A673 (cell line): ENCODE measurements at regions of chr12 and their contacts with region 1.

Region 1: GRCh38 chr12:34022079-34022830 is at the start of gene ALG10:
- DNase-seq: peak; percentile 99
- H3K4me3 ChIP-seq: peak within 1 kb of the TSS; percentile 91
- H3K27ac ChIP-seq: peak within 1 kb of the TSS; percentile 91
- H3K4me1 ChIP-seq: no peaks in the 10 kb centered on the region
- H3K27me3 ChIP-seq: no peaks in the 10 kb centered on the region
- CTCF ChIP-seq: peak; percentile 70
- total RNA-seq, gene ALG10: 19.4 TPM in 2 replicates

Region 2: DNA sequence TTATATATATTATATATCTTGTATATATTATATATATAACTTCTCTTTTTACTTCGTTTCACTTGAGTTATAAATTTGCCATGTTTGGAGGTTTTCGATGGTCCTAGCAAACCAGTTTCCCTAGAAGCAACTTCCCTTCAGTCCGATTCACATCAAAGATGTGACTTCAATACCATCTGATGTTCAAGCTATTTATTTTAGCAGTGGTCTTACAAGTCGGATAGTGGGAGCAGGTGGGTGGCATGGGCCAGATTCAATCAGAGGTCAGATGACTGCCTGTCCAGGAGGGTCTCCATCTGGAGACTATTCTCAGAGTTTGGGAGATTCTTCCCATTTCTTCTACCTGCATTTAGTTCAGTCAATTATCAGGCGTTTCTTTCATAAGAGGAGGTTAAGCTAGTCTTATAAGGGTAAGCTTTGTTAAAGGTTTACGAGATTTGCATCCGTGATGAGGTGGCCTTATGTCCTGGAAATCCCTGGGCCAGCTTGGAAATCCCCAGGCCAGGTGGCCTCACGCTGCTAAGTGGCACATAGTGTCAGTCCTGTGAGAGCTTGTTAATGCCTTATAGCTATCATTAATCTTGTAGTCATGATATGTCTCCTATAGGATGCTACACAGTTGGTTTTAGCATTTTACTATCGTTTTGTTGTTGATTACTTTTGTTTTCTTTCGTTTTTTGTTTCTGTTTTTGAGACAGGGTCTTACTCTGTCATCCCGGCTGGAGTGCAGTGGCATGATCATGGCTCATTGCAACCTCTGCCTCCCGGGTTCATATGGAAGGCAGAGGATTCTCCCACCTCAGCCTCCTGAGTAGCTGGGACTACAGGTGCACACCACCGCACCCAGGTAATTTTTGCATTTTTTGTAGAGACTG is 1769.8 kb before region 1 on chr12:
- CTCF ChIA-PET with region 1: no interaction called
- POLR2A ChIA-PET with region 1: no interaction called
- intact Hi-C with region 1: no loop called
- DNase-seq: no peak
- H3K4me3 ChIP-seq: no peak overlapping the region
- H3K27ac ChIP-seq: no peak overlapping the region
- H3K4me1 ChIP-seq: peaks cover 8% of the 10 kb centered on the region
- H3K27me3 ChIP-seq: no peaks in the 10 kb centered on the region
- CTCF ChIP-seq: no peak

Region 3: GRCh38 chr12:32377344-32378055 is 1644.8 kb before region 1 on chr12:
- CTCF ChIA-PET with region 1: no interaction called
- POLR2A ChIA-PET with region 1: no interaction called
- intact Hi-C with region 1: loop called (anchors 10 kb)
- DNase-seq: no peak
- H3K4me3 ChIP-seq: no peak overlapping the region
- H3K27ac ChIP-seq: no peak overlapping the region
- H3K4me1 ChIP-seq: peaks cover 2% of the 10 kb centered on the region
- H3K27me3 ChIP-seq: no peaks in the 10 kb centered on the region
- CTCF ChIP-seq: no peak

Region 4: GRCh38 chr12:32755654-32756475 is 1266.4 kb before region 1 on chr12 and contains the start of gene YARS2:
- CTCF ChIA-PET with region 1: interaction called, 7 read pairs
- POLR2A ChIA-PET with region 1: interaction called, 4 read pairs
- intact Hi-C with region 1: loop called (anchors 2 kb)
- DNase-seq: peak; percentile 99
- H3K4me3 ChIP-seq: peak within 1 kb of the TSS; percentile 65
- H3K27ac ChIP-seq: peak within 1 kb of the TSS; percentile 87
- H3K4me1 ChIP-seq: no peaks in the 10 kb centered on the region
- H3K27me3 ChIP-seq: no peaks in the 10 kb centered on the region
- CTCF ChIP-seq: peak; percentile 88
- total RNA-seq, gene YARS2: 29.1 and 29.4 TPM in 2 replicates

Region 5: GRCh38 chr12:32947206-32948067 is 1074.8 kb before region 1 on chr12:
- CTCF ChIA-PET with region 1: interaction called, 3 read pairs
- POLR2A ChIA-PET with region 1: no interaction called
- intact Hi-C with region 1: loop called (anchors 2 kb)
- DNase-seq: peak; percentile 37
- H3K4me3 ChIP-seq: no peak overlapping the region
- H3K27ac ChIP-seq: no peak overlapping the region
- H3K4me1 ChIP-seq: no peaks in the 10 kb centered on the region
- H3K27me3 ChIP-seq: no peaks in the 10 kb centered on the region
- CTCF ChIP-seq: peak; percentile 48; the same call in 1 of the 2 replicates

Region 6: GRCh38 chr12:33649992-33650391 is 372.3 kb before region 1 on chr12:
- CTCF ChIA-PET with region 1: no interaction called
- POLR2A ChIA-PET with region 1: no interaction called
- intact Hi-C with region 1: no loop called
- DNase-seq: no peak
- H3K4me3 ChIP-seq: no peak overlapping the region
- H3K27ac ChIP-seq: no peak overlapping the region
- H3K4me1 ChIP-seq: no peaks in the 10 kb centered on the region
- H3K27me3 ChIP-seq: no peaks in the 10 kb centered on the region
- CTCF ChIP-seq: no peak